B cell (primary cell): ENCODE measurements at regions of chr18 and their contacts with region 1.

Region 1: DNA sequence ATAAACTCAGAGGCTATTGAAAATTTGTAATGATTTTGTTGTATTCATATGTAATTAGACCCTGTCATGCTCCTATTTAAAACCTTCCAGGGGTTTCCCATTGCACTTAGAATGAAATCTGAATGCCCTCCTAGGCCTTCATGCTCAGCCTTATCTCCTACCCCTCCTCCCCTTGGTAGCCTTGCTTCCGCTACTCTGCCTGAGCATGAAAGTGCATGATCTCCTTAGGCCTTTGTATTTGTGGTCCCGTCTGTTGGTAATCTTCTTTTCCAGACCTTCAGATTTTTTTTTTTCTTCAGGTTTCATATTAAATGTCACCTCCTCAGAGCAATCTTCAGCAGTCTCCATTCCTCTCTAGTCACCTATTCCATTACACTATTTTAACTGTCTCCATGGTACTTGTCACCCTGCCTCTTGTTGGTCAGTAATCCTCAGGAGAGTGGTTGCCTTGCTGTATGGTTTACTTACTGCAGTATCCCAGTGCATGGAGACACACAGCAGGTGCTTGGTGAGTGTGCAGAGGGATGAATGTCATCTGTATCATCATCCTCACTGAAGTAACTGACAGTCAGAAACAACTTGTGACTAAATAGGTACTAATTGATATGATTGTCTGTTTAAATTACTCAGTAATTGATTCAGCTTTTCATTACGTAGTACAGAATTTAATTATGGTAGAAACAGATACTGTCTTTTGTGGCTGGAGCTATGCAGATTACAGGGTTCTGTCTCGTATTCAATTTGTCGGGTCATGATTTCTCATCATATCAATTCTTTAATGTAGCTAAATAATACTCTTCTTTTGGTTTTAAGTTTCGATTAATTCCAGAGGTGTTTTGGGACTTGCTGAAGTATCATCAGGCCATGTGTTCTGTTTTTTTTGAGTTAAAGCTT is 63.9 kb downstream of the PHLPP1 start:
- DNase-seq: no peak
- ATAC-seq: no peak
- H3K4me3 ChIP-seq: no peak overlapping the region
- H3K4me3 Mint-ChIP-seq: no peak overlapping the region
- H3K27ac ChIP-seq: no peak overlapping the region
- H3K27ac Mint-ChIP-seq: no peak overlapping the region
- H3K4me1 ChIP-seq: peaks cover 0 to 4% of the 10 kb centered on the region in 2 donors
- H3K4me1 Mint-ChIP-seq: peaks cover 12% of the 10 kb centered on the region
- H3K27me3 ChIP-seq: no peaks in the 10 kb centered on the region
- H3K27me3 Mint-ChIP-seq: no peaks in the 10 kb centered on the region
- CTCF ChIP-seq: no peak

Region 2: DNA sequence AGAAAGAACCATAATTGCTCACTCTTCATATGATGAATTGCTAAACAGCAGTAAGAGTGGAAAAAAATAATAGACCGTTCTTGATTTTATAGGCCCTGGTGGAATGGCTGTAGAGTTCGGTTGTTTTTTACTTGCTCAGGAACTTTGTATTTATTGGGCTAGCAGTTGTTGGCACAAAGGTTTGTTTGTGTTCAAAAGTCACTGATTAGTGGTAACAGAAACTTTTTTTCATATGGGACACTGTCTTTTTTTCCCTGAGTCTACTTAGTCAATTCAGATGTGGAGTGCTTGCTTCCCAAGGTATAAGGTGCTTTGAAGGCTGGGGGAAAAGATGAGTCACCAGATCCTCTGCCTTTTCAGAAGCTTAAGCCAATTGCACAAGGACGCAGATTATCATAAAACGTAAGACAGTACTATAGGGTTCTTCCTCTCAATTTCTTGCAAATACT is 38.1 kb before region 1 on chr18:
- CTCF ChIA-PET with region 1: no interaction called
- POLR2A ChIA-PET with region 1: no interaction called
- intact Hi-C with region 1: loop called (anchors 5 kb)
- DNase-seq: no peak
- ATAC-seq: no peak
- H3K4me3 ChIP-seq: no peak overlapping the region
- H3K4me3 Mint-ChIP-seq: no peak overlapping the region
- H3K27ac ChIP-seq: no peak overlapping the region
- H3K27ac Mint-ChIP-seq: no peak overlapping the region
- H3K4me1 ChIP-seq: peaks cover 18 to 29% of the 10 kb centered on the region in 2 donors
- H3K4me1 Mint-ChIP-seq: peaks cover 37% of the 10 kb centered on the region
- H3K27me3 ChIP-seq: no peaks in the 10 kb centered on the region
- H3K27me3 Mint-ChIP-seq: no peaks in the 10 kb centered on the region
- CTCF ChIP-seq: no peak

Region 3: DNA sequence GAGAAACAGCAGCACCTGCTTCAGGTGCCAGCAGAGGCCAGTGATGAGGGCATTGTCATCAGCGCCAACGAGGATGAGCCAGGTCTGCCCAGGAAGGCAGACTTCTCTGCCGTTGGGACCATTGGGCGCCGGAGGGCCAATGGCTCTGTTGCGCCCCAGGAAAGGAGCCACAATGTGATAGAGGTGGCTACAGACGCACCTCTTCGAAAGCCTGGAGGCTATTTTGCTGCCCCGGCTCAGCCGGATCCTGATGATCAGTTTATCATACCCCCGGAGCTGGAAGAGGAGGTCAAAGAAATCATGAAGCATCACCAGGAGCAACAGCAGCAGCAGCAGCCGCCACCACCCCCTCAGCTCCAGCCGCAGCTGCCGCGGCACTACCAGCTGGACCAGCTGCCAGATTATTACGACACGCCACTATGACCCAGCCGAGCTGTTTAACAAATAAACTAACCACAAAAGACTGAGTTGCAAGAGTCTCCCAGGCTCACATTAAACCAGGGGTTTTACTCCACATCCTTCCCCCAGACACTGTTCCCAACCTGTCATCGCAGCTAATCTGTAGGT is 199.9 kb after region 1 on chr18:
- CTCF ChIA-PET with region 1: no interaction called
- POLR2A ChIA-PET with region 1: no interaction called
- intact Hi-C with region 1: no loop called
- DNase-seq: no peak
- ATAC-seq: no peak
- H3K4me3 ChIP-seq: no peak overlapping the region
- H3K4me3 Mint-ChIP-seq: no peak overlapping the region
- H3K27ac ChIP-seq: no peak overlapping the region
- H3K27ac Mint-ChIP-seq: no peak overlapping the region
- H3K4me1 ChIP-seq: peaks cover 3 to 5% of the 10 kb centered on the region in 2 donors
- H3K4me1 Mint-ChIP-seq: peaks cover 6% of the 10 kb centered on the region
- H3K27me3 ChIP-seq: no peaks in the 10 kb centered on the region
- H3K27me3 Mint-ChIP-seq: no peaks in the 10 kb centered on the region
- CTCF ChIP-seq: no peak